Heart left ventricle (tissue), 16 donors: ENCODE measurements at regions of chr3 and their contacts with region 1.

Region 1: DNA sequence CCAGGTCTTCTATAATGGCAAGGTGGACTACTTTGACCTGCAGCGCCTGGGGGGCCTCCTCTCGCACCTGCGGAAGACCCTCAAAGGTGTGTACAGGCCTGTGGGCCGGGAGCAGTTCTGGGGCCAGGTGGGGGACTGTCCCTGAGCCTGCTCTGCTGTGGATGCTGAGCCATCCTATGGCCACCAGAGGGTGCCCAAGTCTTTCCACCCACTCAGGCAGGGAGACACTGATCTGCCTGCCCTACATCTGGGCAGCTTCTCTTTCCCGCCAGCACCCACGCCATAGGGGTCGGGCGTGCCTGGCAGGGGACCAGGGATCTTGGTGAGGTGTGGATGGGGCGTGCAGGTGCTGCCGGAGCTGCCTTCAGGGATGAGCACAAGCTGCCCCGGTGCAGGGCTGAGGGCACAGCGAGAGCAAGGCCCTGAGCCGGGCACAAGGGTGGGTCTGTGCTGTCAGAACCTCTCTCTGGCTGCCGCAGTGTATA is 14.1 kb downstream of the RNF123 start:
- DNase-seq: peak in 3 of 5 donors; percentile 56 to 64 (median 56)
- ATAC-seq: peak; percentile 34 to 78 (median 64)
- H3K4me3 ChIP-seq: no peak overlapping the region
- H3K27ac ChIP-seq: no peak overlapping the region
- H3K4me1 ChIP-seq: peaks cover 0 to 21% (median 4%) of the 10 kb centered on the region in 12 donors
- H3K27me3 ChIP-seq: no peaks in the 10 kb centered on the region
- CTCF ChIP-seq: peak; percentile 59 to 80 (median 74)
- POLR2A ChIP-seq: no peak

Region 2: DNA sequence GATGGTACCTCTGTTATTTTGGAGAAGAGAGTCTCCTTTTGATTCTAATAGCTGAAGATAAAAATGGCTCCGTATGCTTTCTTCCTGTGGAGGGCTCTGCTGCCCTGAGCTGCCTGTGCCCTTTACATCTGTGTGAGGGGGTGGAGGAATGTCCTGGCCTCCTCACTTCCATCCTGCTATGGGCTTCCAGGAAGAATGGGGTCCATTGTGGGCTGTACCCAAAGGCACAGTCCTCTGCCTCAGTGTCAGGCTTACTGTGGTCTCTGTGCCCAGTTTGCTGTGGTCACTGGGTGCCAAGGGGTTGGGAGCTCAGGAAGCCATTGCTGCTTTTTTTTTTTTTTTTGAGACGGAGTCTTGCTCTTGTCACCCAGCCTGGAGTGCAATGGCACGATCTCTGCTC is 219.0 kb before region 1 on chr3:
- intact Hi-C with region 1: no loop called
- DNase-seq: no peak
- ATAC-seq: peak in 3 of 4 donors; percentile 20 to 34 (median 33)
- H3K4me3 ChIP-seq: no peak overlapping the region
- H3K27ac ChIP-seq: peak overlapping the region in 10 of 12 donors; percentile 13 to 74 (median 62)
- H3K4me1 ChIP-seq: peaks cover 0 to 47% (median 22%) of the 10 kb centered on the region in 12 donors
- H3K27me3 ChIP-seq: no peaks in the 10 kb centered on the region
- CTCF ChIP-seq: no peak
- POLR2A ChIP-seq: no peak

Region 3: DNA sequence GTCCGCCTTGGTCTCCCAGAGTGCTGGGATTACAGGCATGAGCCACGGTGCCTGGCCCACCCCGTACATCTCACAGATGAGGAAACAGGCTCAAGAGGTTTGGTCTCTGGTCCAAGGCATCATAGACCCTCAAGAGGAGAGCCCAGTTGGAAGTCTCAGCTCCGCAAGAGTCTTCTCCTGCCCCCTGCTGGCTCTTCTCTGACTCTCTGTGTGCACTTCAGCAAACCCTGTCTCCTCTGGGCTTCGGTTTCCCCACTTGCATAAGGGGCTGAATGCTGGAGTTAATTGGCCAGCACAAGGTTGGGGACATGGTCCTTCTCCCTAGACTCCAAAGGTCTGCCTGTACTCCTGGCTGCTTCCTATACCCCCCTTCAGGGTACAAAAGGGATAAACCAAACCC is 196.3 kb after region 1 on chr3:
- intact Hi-C with region 1: loop called in 5 of 10 experiments (anchors 2 to 10 kb)
- DNase-seq: no peak
- ATAC-seq: no peak
- H3K4me3 ChIP-seq: no peak overlapping the region
- H3K27ac ChIP-seq: no peak overlapping the region
- H3K4me1 ChIP-seq: peaks cover 3 to 26% (median 14%) of the 10 kb centered on the region in 12 donors
- H3K27me3 ChIP-seq: no peaks in the 10 kb centered on the region
- CTCF ChIP-seq: peak in 10 of 12 donors; percentile 8 to 48 (median 23)
- POLR2A ChIP-seq: no peak

Region 4: GRCh38 chr3:49912881-49913281 is 209.4 kb after region 1 on chr3:
- intact Hi-C with region 1: loop called in 3 of 10 experiments (anchors 5 to 10 kb)
- DNase-seq: no peak
- ATAC-seq: peak; percentile 56 to 76 (median 64)
- H3K4me3 ChIP-seq: no peak overlapping the region
- H3K27ac ChIP-seq: no peak overlapping the region
- H3K4me1 ChIP-seq: peaks cover 0 to 2% (median 0%) of the 10 kb centered on the region in 12 donors
- H3K27me3 ChIP-seq: no peaks in the 10 kb centered on the region
- CTCF ChIP-seq: no peak
- POLR2A ChIP-seq: no peak

Region 5: GRCh38 chr3:49952924-49953323 is 249.4 kb after region 1 on chr3:
- intact Hi-C with region 1: no loop called
- DNase-seq: no peak
- ATAC-seq: no peak
- H3K4me3 ChIP-seq: no peak overlapping the region
- H3K27ac ChIP-seq: no peak overlapping the region
- H3K4me1 ChIP-seq: peaks cover 0 to 18% (median 12%) of the 10 kb centered on the region in 12 donors
- H3K27me3 ChIP-seq: no peaks in the 10 kb centered on the region
- CTCF ChIP-seq: no peak
- POLR2A ChIP-seq: no peak